ENCODE measurements at regions of chr6 and their contacts with region 1.

Region 1: GRCh38 chr6:506508-506907 is 115.0 kb downstream of the IRF4 start:
- DNase-seq: peak; percentile 77
- ATAC-seq: peak; percentile 59
- H3K4me3 Mint-ChIP-seq: peak overlapping the region; percentile 13
- H3K27ac Mint-ChIP-seq: peak overlapping the region; percentile 97
- H3K4me1 Mint-ChIP-seq: peaks cover 100% of the 10 kb centered on the region
- H3K27me3 Mint-ChIP-seq: no peaks in the 10 kb centered on the region

Region 2: GRCh38 chr6:246352-246751 is 260.2 kb before region 1 on chr6:
- CTCF ChIA-PET with region 1: no interaction called
- POLR2A ChIA-PET with region 1: interaction called, 11 read pairs
- intact Hi-C with region 1: no loop called
- DNase-seq: no peak
- ATAC-seq: peak; percentile 12
- H3K4me3 Mint-ChIP-seq: no peak overlapping the region
- H3K27ac Mint-ChIP-seq: no peak overlapping the region
- H3K4me1 Mint-ChIP-seq: peaks cover 14% of the 10 kb centered on the region
- H3K27me3 Mint-ChIP-seq: peaks cover 2% of the 10 kb centered on the region

Region 3: GRCh38 chr6:524803-525202 is 18.3 kb after region 1 on chr6:
- CTCF ChIA-PET with region 1: no interaction called
- POLR2A ChIA-PET with region 1: no interaction called
- intact Hi-C with region 1: loop called in 1 of 2 experiments (anchors 2 kb)
- DNase-seq: peak; percentile 67
- ATAC-seq: peak; percentile 75
- H3K4me3 Mint-ChIP-seq: no peak overlapping the region
- H3K27ac Mint-ChIP-seq: peak overlapping the region; percentile 79
- H3K4me1 Mint-ChIP-seq: peaks cover 28% of the 10 kb centered on the region
- H3K27me3 Mint-ChIP-seq: no peaks in the 10 kb centered on the region

Region 4: GRCh38 chr6:548517-548916 is 42.0 kb after region 1 on chr6:
- CTCF ChIA-PET with region 1: interaction called, 8 read pairs
- POLR2A ChIA-PET with region 1: interaction called, 3 read pairs
- intact Hi-C with region 1: loop called (anchors 2 kb)
- DNase-seq: peak; percentile 75
- ATAC-seq: peak; percentile 90
- H3K4me3 Mint-ChIP-seq: peak overlapping the region; percentile 57
- H3K27ac Mint-ChIP-seq: peak overlapping the region; percentile 92
- H3K4me1 Mint-ChIP-seq: peaks cover 70% of the 10 kb centered on the region
- H3K27me3 Mint-ChIP-seq: no peaks in the 10 kb centered on the region

Region 5: DNA sequence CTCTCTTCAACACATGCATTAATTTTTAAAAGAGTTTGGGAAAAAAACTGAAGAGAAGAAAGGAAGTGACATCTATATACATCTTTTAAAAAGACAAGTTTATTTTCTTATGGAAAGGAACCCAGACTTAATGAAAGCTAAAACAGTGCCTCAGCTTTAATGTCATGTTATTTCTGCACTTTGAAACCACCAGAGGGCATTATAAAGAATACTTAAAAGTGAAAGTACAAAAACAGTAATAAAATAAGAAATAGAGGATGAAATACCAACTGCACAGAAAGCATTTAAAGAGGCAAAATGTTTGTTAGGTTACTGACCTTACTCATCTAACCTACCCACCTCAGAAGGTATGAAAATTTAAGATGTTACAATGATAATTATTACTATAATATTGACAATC is 51.6 kb after region 1 on chr6:
- CTCF ChIA-PET with region 1: interaction called, 3 read pairs
- POLR2A ChIA-PET with region 1: interaction called, 3 read pairs
- intact Hi-C with region 1: loop called (anchors 2 kb)
- DNase-seq: no peak
- ATAC-seq: no peak
- H3K4me3 Mint-ChIP-seq: peak overlapping the region; percentile 15
- H3K27ac Mint-ChIP-seq: peak overlapping the region; percentile 90
- H3K4me1 Mint-ChIP-seq: peaks cover 63% of the 10 kb centered on the region
- H3K27me3 Mint-ChIP-seq: no peaks in the 10 kb centered on the region

Measured in activated CD4-positive, alpha-beta T cell treated with anti-CD3 and anti-CD28 coated beads for 36 hours (primary cell).